Lower leg skin (tissue), 4 donors: ENCODE measurements at regions of chr13 and their contacts with region 1.

Region 1: GRCh38 chr13:30457306-30457891 is 8.3 kb downstream of the HMGB1 start:
- DNase-seq: no peak
- H3K4me3 ChIP-seq: no peak overlapping the region
- CTCF ChIP-seq: no peak
- POLR2A ChIP-seq: no peak

Region 2: GRCh38 chr13:29771247-29771646 is 686.2 kb before region 1 on chr13:
- intact Hi-C with region 1: loop called (anchors 5 kb)
- DNase-seq: no peak
- H3K4me3 ChIP-seq: no peak overlapping the region
- CTCF ChIP-seq: no peak
- POLR2A ChIP-seq: no peak

Region 3: GRCh38 chr13:30545320-30545719 is 87.9 kb after region 1 on chr13:
- intact Hi-C with region 1: no loop called
- DNase-seq: no peak
- H3K4me3 ChIP-seq: no peak overlapping the region
- CTCF ChIP-seq: no peak
- POLR2A ChIP-seq: no peak